ENCODE measurements at regions of chr1 and their contacts with region 1.

Region 1: DNA sequence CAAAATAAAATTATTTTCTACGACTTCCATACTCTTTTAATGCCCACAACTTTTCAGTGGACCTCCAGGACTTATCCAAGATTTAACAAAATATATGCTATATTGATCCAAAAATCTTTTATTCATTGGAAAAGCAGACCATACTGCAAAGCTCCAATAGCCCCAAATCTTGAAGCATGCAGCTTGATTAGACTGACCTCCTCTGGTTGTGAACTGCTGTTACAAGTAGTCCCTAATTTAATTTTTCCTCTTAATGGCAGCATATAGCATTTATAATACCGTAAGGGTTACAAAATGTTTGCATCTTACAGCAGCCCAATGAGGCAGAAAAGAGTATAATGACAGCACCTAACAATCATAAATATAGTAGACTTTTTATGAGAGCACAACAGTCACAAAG is 49.8 kb downstream of the TPR start:
- DNase-seq: no peak
- H3K4me3 Mint-ChIP-seq: no peak overlapping the region
- H3K27ac Mint-ChIP-seq: no peak overlapping the region
- H3K4me1 Mint-ChIP-seq: peaks cover 38% of the 10 kb centered on the region
- H3K27me3 Mint-ChIP-seq: no peaks in the 10 kb centered on the region

Region 2: GRCh38 chr1:186155594-186155993 is 169.6 kb before region 1 on chr1:
- intact Hi-C with region 1: loop called (anchors 1 kb)
- DNase-seq: no peak
- H3K4me3 Mint-ChIP-seq: no peak overlapping the region
- H3K27ac Mint-ChIP-seq: no peak overlapping the region
- H3K4me1 Mint-ChIP-seq: no peaks in the 10 kb centered on the region
- H3K27me3 Mint-ChIP-seq: peaks cover 4% of the 10 kb centered on the region

Region 3: DNA sequence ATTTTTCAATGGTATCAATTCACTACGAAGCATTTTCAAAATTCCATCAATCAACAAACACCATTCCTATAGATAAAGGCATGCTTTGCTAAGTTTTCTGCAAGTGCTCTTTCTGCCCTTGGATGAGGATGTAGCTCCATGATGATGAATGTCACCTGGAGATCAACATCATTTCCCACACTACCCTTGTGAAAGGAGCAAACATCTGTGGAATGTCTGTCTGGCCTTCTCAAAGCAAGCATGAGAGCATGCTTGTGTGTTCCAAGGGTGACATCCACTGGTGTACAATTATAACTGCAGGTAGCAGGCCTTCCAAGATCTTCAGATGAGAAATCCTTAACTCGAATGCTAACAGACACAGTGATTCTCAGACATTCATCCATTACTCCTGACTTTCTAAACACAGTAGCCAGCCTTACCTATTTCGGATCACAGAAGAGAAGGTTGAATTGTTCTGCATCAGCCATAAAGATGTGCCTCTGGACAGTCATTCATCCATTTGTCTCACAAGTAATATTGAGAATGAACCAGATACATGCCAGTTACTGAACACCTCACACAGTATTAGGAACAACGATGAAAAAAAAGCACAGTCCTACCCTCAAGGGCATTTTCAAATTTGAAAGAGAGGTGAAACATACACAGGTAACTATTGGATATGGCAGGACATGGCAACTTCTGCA is 112.6 kb before region 1 on chr1:
- intact Hi-C with region 1: loop called (anchors 10 kb)
- DNase-seq: peak; percentile 19
- H3K4me3 Mint-ChIP-seq: no peak overlapping the region
- H3K27ac Mint-ChIP-seq: no peak overlapping the region
- H3K4me1 Mint-ChIP-seq: no peaks in the 10 kb centered on the region
- H3K27me3 Mint-ChIP-seq: peaks cover 26% of the 10 kb centered on the region

Region 4: GRCh38 chr1:186272486-186272885 is 52.8 kb before region 1 on chr1:
- intact Hi-C with region 1: loop called (anchors 1 kb)
- DNase-seq: no peak
- H3K4me3 Mint-ChIP-seq: no peak overlapping the region
- H3K27ac Mint-ChIP-seq: no peak overlapping the region
- H3K4me1 Mint-ChIP-seq: peaks cover 30% of the 10 kb centered on the region
- H3K27me3 Mint-ChIP-seq: no peaks in the 10 kb centered on the region

Region 5: GRCh38 chr1:186304982-186305949 is 20.0 kb before region 1 on chr1:
- intact Hi-C with region 1: loop called (anchors 1 kb)
- DNase-seq: no peak
- H3K4me3 Mint-ChIP-seq: peak overlapping the region; percentile 48
- H3K27ac Mint-ChIP-seq: peak overlapping the region; percentile 86
- H3K4me1 Mint-ChIP-seq: peaks cover 58% of the 10 kb centered on the region
- H3K27me3 Mint-ChIP-seq: no peaks in the 10 kb centered on the region

Region 6: GRCh38 chr1:186363891-186364290 is 38.7 kb after region 1 on chr1:
- intact Hi-C with region 1: loop called (anchors 5 kb)
- DNase-seq: no peak
- H3K4me3 Mint-ChIP-seq: no peak overlapping the region
- H3K27ac Mint-ChIP-seq: no peak overlapping the region
- H3K4me1 Mint-ChIP-seq: peaks cover 32% of the 10 kb centered on the region
- H3K27me3 Mint-ChIP-seq: no peaks in the 10 kb centered on the region

Region 7: DNA sequence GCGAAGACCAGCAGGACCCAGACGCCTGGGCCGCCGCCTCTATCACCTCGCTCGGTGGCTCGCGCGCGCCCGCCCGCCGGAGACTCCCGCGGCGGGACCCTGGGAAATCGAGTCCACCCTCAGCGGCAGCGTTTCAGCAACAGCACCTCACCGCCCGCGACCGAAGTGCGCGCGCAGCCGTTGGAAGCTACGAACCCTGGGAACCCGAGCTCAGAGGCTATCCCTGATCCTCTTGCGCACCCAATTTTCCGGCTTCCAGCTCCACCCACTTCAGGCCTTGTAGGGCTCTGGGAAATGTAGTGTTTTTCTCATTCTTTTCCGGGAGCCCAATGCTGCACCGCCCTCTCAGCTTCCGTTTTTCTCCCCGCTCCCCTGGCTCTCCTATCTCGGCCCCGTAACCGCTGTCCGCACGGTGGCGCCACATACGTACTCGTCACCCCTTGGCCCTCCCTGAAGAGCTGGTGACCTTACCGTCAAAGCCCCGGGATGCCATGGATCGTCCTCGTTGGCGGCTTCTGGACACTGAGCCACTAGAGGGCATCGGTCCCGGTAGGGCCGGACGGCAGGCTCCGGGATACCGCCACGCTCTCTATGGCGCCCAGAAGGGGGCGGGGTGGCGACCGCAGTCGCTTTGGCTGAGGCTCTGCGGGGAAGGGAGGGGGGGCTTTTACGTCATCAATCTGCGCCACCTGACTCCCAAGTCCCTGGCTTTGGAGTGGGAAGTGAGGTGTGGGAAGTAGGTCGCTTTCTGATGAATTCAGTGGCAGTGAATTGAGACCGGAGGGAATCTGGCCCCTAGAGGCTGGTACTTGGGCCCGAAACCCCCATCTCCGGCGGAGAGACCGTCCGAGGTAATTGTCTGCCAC is 50.1 kb after region 1 on chr1 and contains the starts of genes ODR4 and TPR:
- intact Hi-C with region 1: loop called (anchors 5 kb)
- DNase-seq: peak; percentile 96
- H3K4me3 Mint-ChIP-seq: peak within 1 kb of the TSS; percentile 100
- H3K27ac Mint-ChIP-seq: peak within 1 kb of the TSS; percentile 96
- H3K4me1 Mint-ChIP-seq: peaks cover 59% of the 10 kb centered on the region
- H3K27me3 Mint-ChIP-seq: peaks cover 4% of the 10 kb centered on the region
- total RNA-seq, gene ODR4: 15.5 and 17.7 TPM in 2 replicates
- total RNA-seq, gene TPR: 174 and 179 TPM in 2 replicates

Region 8: DNA sequence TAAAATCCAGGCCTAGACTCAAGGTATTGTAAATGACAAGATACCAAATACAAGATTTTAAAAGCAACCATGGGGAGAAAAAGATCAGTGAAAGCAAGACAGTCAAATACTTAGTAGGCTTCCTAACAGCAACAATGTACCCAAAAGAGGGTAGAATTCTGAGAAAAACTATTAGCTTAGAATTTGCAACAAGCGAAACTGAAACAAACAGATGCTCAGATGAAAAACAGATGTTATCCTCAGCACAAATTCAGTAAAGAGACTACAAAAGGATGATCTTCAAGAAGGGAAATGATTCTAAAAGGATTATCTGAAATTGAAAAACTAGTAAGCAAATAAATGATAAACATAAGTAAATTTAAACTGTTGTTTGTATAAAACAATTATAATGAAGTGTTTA is 95.7 kb after region 1 on chr1:
- intact Hi-C with region 1: no loop called
- DNase-seq: no peak
- H3K4me3 Mint-ChIP-seq: peak overlapping the region; percentile 54
- H3K27ac Mint-ChIP-seq: peak overlapping the region; percentile 92
- H3K4me1 Mint-ChIP-seq: peaks cover 24% of the 10 kb centered on the region
- H3K27me3 Mint-ChIP-seq: no peaks in the 10 kb centered on the region